Activated CD8-positive, alpha-beta T cell treated with anti-CD3 and anti-CD28 coated beads for 36 hours (primary cell): ENCODE measurements at regions of chr19 and their contacts with region 1.

Region 1: GRCh38 chr19:53792721-53793433 is 31.2 kb downstream of the NLRP12 start:
- DNase-seq: peak; percentile 88
- ATAC-seq: peak; percentile 100
- H3K4me3 Mint-ChIP-seq: no peak overlapping the region
- H3K27ac Mint-ChIP-seq: no peak overlapping the region
- H3K4me1 Mint-ChIP-seq: no peaks in the 10 kb centered on the region
- H3K27me3 Mint-ChIP-seq: peaks cover 1% of the 10 kb centered on the region
- CTCF ChIP-seq: peak; percentile 93

Region 2: DNA sequence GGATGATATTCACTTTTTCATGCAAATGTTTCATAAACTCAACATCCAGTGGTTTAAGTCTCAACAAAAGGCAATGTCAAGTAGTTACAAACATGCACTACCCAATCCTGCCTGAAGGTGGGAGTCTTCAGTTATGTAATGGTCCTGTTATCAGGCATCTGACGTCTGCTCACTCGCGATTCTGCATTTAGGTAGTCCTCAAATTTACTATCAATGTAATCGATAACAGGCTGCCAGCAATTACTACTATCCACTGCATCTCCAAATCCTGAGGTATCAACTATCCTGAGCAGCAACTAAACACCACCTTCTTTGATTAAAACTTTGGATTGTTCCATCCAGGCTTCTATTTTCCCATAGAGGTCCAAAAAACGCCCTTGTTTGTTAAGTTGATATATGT is 19.9 kb before region 1 on chr19:
- CTCF ChIA-PET with region 1: interaction called, 18 read pairs
- POLR2A ChIA-PET with region 1: interaction called, 3 read pairs
- intact Hi-C with region 1: no loop called
- DNase-seq: peak; percentile 77
- ATAC-seq: peak; percentile 49
- H3K4me3 Mint-ChIP-seq: no peak overlapping the region
- H3K27ac Mint-ChIP-seq: no peak overlapping the region
- H3K4me1 Mint-ChIP-seq: peaks cover 1% of the 10 kb centered on the region
- H3K27me3 Mint-ChIP-seq: no peaks in the 10 kb centered on the region
- CTCF ChIP-seq: peak; percentile 76

Region 3: GRCh38 chr19:53782698-53783097 is 10.2 kb before region 1 on chr19:
- CTCF ChIA-PET with region 1: interaction called, 11 read pairs
- POLR2A ChIA-PET with region 1: no interaction called
- intact Hi-C with region 1: no loop called
- DNase-seq: no peak
- ATAC-seq: no peak
- H3K4me3 Mint-ChIP-seq: no peak overlapping the region
- H3K27ac Mint-ChIP-seq: no peak overlapping the region
- H3K4me1 Mint-ChIP-seq: peaks cover 4% of the 10 kb centered on the region
- H3K27me3 Mint-ChIP-seq: peaks cover 8% of the 10 kb centered on the region
- CTCF ChIP-seq: no peak

Region 4: DNA sequence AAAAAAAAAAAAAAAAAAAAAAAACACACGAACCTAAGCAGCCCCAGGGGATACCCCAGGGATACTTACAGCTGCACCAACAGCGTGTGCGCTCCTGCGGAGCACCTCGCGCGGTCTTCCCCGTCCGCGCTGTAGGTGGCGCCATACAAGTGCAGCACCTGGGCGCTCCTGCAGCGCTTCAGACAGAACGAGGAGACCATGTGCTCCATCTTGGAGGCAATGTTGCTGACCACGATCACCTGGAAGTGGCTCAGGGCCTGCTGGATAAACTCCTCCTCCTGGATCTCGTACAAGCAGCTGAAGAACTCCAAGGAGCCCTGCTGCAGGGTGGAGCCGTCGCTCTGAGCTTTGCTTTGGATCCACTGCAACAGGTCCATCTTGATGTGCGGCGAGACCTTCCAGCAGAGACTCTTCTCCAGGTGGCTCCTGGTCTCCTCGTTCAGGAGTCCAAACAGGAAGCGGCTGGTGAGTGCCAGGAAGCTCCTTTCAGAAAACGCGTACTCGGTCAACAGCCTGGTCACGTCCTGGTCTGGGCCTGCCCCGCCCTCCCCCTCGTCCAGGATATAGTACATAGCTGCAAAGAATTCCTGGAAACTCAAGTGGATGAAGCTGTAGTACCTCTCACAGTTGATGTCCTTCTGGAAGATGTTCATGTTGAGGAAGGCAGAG is 16.8 kb after region 1 on chr19:
- CTCF ChIA-PET with region 1: interaction called, 12 read pairs
- POLR2A ChIA-PET with region 1: no interaction called
- intact Hi-C with region 1: no loop called
- DNase-seq: peak; percentile 11
- ATAC-seq: no peak
- H3K4me3 Mint-ChIP-seq: no peak overlapping the region
- H3K27ac Mint-ChIP-seq: no peak overlapping the region
- H3K4me1 Mint-ChIP-seq: no peaks in the 10 kb centered on the region
- H3K27me3 Mint-ChIP-seq: no peaks in the 10 kb centered on the region
- CTCF ChIP-seq: no peak

Region 5: GRCh38 chr19:54023191-54023590 is 230.3 kb after region 1 on chr19:
- CTCF ChIA-PET with region 1: interaction called, 23 read pairs
- POLR2A ChIA-PET with region 1: no interaction called
- intact Hi-C with region 1: no loop called
- DNase-seq: no peak
- ATAC-seq: no peak
- H3K4me3 Mint-ChIP-seq: no peak overlapping the region
- H3K27ac Mint-ChIP-seq: no peak overlapping the region
- H3K4me1 Mint-ChIP-seq: peaks cover 10% of the 10 kb centered on the region
- H3K27me3 Mint-ChIP-seq: peaks cover 20% of the 10 kb centered on the region
- CTCF ChIP-seq: no peak

Region 6: GRCh38 chr19:54029930-54030490 is 237.1 kb after region 1 on chr19:
- CTCF ChIA-PET with region 1: interaction called, 23 read pairs
- POLR2A ChIA-PET with region 1: no interaction called
- intact Hi-C with region 1: loop called (anchors 5 kb)
- DNase-seq: peak; percentile 71
- ATAC-seq: no peak
- H3K4me3 Mint-ChIP-seq: no peak overlapping the region
- H3K27ac Mint-ChIP-seq: no peak overlapping the region
- H3K4me1 Mint-ChIP-seq: no peaks in the 10 kb centered on the region
- H3K27me3 Mint-ChIP-seq: peaks cover 23% of the 10 kb centered on the region
- CTCF ChIP-seq: peak; percentile 58